Heart right ventricle (tissue), 16 donors: ENCODE measurements at regions of chr18 and their contacts with region 1.

Region 1: DNA sequence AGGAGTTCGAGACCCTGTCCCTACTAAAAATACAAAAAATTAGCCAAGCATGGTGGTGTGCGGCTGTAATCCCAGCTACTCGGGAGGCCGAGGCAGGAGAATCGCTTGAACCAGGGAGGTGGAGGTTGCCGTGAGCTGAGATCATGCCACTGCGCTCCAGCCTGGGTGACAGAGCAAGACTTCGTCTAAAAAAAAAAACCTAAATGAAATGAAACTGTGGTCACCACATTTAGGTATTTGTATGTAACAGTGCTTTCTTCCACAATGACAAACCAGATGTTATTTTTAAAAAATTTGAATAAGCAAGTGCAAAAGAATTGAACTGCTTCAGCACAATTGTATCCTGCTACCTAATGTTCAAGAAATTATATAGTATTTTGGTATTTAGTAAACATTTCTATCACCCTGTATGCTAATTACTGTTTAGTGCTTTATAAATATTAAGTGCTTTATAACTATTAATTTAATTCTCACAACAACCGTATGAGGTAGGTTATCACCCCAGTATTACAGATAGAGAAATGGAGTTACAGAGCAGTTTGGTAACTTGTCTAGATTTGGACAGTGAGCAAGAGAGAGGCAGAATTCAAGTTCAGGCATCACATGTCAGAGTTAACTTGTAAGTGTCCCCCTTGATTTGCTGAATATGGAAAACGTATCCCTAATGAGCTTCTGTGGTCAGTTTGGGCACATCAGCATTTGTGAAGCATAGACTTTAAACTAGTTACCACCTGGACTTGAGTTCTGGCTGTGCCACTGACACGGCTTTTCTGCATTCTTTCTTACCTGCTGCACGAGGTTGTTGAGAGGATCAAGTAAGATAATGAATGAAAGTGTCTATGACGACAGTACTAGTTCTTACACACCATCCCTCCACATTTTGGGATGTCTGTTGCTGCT is 14.4 kb downstream of the PHLPP1 start:
- DNase-seq: no peak
- ATAC-seq: no peak
- H3K4me3 ChIP-seq: no peak overlapping the region
- H3K27ac ChIP-seq: no peak overlapping the region
- H3K4me1 ChIP-seq: peaks cover 0 to 5% (median 0%) of the 10 kb centered on the region in 9 donors
- H3K27me3 ChIP-seq: no peaks in the 10 kb centered on the region
- CTCF ChIP-seq: no peak

Region 2: DNA sequence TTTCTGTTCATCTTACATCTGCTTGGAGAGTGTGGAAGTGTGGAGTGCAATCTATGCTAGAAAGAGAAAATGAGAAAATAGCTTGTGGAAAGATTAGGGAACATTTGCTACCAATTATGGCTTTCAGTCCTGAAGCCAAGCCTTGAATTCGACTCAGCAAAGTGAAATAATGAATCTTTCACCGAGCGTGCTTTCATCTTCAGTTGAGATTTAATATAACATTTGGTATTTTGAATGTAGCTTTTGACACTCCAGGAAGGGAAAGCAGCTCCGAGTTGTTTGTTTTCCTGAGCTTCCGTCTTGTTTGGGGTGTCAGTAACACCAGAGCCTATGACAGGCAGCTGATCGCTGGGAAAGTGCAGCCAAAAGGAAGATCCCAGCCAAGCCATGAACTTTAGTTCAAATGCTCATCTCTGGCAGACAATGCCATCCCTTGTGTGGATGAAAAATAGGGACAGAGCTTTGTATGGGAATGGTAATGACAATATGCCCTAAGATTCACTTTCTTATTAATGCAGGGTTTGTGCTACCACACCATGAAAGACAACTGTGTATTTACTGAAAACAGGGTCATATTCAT is 39.4 kb before region 1 on chr18:
- intact Hi-C with region 1: no loop called
- DNase-seq: no peak
- ATAC-seq: no peak
- H3K4me3 ChIP-seq: no peak overlapping the region
- H3K27ac ChIP-seq: no peak overlapping the region
- H3K4me1 ChIP-seq: no peaks in the 10 kb centered on the region
- H3K27me3 ChIP-seq: no peaks in the 10 kb centered on the region
- CTCF ChIP-seq: no peak

Region 3: GRCh38 chr18:62771494-62772270 is 41.9 kb after region 1 on chr18:
- intact Hi-C with region 1: loop called in 1 of 10 experiments (anchors 10 kb)
- DNase-seq: no peak
- ATAC-seq: no peak
- H3K4me3 ChIP-seq: no peak overlapping the region
- H3K27ac ChIP-seq: no peak overlapping the region
- H3K4me1 ChIP-seq: peaks cover 0 to 38% (median 20%) of the 10 kb centered on the region in 9 donors
- H3K27me3 ChIP-seq: no peaks in the 10 kb centered on the region
- CTCF ChIP-seq: no peak

Region 4: DNA sequence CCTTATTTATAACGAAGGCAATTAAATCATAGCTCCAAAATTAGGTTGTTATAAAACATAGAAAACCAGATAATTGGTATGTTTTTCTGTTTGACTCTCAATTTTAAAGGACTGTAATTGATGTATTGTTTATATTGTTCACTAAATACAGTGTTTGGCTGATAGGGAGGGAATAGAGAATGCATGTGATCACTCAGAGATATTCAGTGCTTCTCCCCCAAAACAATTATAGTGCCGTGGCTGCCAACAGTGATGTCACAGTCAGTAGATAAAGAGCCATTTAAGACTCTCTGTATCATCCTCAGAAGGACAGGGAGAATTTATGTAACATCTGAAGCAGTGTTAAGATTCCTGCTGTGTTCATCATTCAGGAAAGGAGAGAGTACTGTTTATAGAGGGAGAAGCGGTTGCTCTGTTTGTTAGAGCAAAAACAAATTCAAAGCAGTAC is 55.3 kb after region 1 on chr18:
- intact Hi-C with region 1: loop called in 2 of 10 experiments (anchors 10 kb)
- DNase-seq: peak in 1 of 2 donors; percentile 26
- ATAC-seq: peak in 7 of 8 donors; percentile 37 to 70 (median 53)
- H3K4me3 ChIP-seq: no peak overlapping the region
- H3K27ac ChIP-seq: peak overlapping the region in 4 of 10 donors; percentile 1 to 42 (median 30)
- H3K4me1 ChIP-seq: peaks cover 0 to 40% (median 8%) of the 10 kb centered on the region in 9 donors
- H3K27me3 ChIP-seq: no peaks in the 10 kb centered on the region
- CTCF ChIP-seq: no peak

Region 5: GRCh38 chr18:62790871-62791772 is 61.4 kb after region 1 on chr18:
- intact Hi-C with region 1: loop called in 2 of 10 experiments (anchors 10 kb)
- DNase-seq: no peak
- ATAC-seq: peak in 3 of 8 donors; percentile 49 to 59 (median 56)
- H3K4me3 ChIP-seq: peak overlapping the region in 3 of 10 donors; percentile 5 to 27 (median 12)
- H3K27ac ChIP-seq: peak overlapping the region in 2 of 10 donors; percentile 2 to 20
- H3K4me1 ChIP-seq: peaks cover 0 to 45% (median 13%) of the 10 kb centered on the region in 9 donors
- H3K27me3 ChIP-seq: no peaks in the 10 kb centered on the region
- CTCF ChIP-seq: no peak

Region 6: DNA sequence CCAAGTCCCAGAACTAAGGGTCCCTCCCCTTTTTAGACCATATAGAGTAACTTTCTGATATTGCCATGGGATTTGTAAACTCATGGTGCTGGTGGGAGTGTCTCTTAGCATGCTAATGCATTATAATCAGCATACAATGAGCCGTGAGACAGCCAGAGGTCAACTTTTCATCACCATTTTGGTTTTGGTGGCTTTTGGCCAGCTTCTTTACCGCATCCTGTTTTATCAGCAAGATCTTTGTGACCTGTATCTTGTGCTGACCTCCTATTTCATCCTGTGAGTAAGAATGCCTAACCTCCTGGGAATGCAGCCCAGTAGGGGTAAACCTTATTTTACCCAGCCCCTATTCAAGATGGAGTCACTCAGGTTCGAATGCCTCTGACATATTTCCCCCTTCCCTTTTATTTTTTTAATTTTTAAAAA is 133.9 kb after region 1 on chr18:
- intact Hi-C with region 1: loop called in 1 of 10 experiments (anchors 10 kb)
- DNase-seq: peak in 1 of 2 donors; percentile 25
- ATAC-seq: peak in 2 of 8 donors; percentile 28 to 60
- H3K4me3 ChIP-seq: no peak overlapping the region
- H3K27ac ChIP-seq: no peak overlapping the region
- H3K4me1 ChIP-seq: peaks cover 0 to 42% (median 12%) of the 10 kb centered on the region in 9 donors
- H3K27me3 ChIP-seq: no peaks in the 10 kb centered on the region
- CTCF ChIP-seq: no peak